ENCODE measurements at regions of chr7 and their contacts with region 1.

Region 1: DNA sequence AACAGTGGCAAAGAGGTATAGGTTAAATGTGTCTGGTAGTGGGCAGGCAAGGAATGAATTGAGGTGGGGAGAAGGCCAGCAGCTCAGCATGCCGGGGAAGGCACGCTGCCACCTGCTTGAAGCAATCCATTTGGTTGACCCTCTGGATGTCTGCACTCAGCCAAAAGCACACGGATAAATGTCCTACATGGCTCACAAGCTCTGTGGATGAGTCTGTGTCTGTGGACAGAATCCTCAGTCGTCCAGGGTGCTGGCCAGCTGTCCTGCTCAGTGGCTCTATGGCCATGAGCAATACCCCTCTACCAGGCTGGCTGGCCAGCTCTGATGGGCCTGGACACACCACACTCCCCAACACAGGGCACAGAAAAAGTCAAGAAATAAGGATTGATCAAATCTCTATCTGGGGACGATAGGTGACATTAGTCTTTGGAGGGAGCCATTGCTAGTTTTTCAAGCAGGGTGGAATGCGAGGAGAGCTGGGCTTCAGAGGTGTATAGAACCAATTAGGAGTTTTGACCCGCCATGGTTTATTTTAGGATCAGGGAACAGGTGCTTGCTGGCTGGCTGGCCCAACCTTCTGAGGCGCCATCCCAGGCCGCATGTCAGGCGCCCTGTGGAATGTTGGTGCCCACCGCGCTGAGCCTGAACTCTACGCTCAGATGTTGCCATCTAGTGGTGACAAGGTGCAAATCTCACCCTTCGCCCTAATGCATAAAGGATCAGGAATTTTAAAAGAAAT is 493.4 kb downstream of the TNS3 start:
- DNase-seq: peak; percentile 49
- H3K4me3 ChIP-seq: no peak overlapping the region
- H3K27ac ChIP-seq: no peak overlapping the region
- H3K4me1 ChIP-seq: no peaks in the 10 kb centered on the region
- H3K27me3 ChIP-seq: no peaks in the 10 kb centered on the region
- CTCF ChIP-seq: peak; percentile 68 to 86 (median 84)
- POLR2A ChIP-seq: no peak

Region 2: DNA sequence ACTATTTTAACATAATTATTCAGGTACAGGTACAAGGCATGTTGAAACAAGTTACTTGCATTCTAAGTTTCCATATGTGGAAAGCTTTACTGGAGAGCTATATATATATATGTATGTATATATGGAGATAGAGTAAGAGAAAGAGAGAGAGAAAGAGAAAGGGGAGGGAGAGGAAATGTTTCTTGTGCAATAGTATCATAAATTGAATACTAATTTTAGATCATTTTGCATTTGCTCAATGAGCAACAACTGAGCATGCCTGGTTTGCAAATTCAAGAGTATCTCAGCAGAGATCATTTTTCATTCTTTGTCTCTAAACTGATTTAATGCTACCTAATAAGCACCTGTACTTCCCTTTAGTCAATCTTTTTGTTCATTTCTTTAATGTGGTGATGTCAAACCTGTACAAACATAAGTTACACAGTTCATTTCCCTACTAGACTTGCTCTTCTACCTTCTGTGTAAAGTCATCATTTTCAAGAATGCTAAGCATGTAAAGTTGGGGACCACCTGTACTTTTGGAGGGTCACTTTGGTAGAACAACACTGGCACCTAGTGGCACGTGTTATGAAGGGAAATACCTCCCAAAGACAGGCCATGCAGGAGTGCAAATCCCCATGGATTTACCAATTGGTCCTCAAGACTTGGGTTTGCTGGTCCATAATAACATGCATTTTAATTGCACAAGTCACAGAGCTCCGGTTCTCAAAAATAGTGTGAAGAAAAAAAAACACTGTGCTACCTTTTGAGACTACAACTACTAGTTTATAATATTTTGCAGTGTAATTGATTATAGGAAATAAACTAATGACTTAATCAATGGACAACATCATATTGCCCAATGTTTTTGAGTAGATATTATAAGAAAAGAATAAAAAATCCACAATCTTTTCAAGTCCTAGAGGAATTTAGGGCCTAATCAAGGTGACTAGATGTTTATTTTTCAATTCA is 736.2 kb before region 1 on chr7:
- intact Hi-C with region 1: loop called (anchors 5 kb)
- DNase-seq: peak; percentile 21
- H3K4me3 ChIP-seq: no peak overlapping the region
- H3K27ac ChIP-seq: no peak overlapping the region
- H3K4me1 ChIP-seq: no peaks in the 10 kb centered on the region
- H3K27me3 ChIP-seq: no peaks in the 10 kb centered on the region
- CTCF ChIP-seq: peak in 3 of 4 experiments; percentile 47 to 76 (median 61)
- POLR2A ChIP-seq: no peak

Region 3: GRCh38 chr7:46776790-46777189 is 311.7 kb before region 1 on chr7:
- intact Hi-C with region 1: loop called (anchors 10 kb)
- DNase-seq: no peak
- H3K4me3 ChIP-seq: no peak overlapping the region
- H3K27ac ChIP-seq: no peak overlapping the region
- H3K4me1 ChIP-seq: no peaks in the 10 kb centered on the region
- H3K27me3 ChIP-seq: no peaks in the 10 kb centered on the region
- CTCF ChIP-seq: peak in 3 of 4 experiments; percentile 12 to 27 (median 24)
- POLR2A ChIP-seq: no peak

Region 4: GRCh38 chr7:47045207-47046051 is 43.1 kb before region 1 on chr7:
- intact Hi-C with region 1: no loop called
- DNase-seq: peak; percentile 21
- H3K4me3 ChIP-seq: no peak overlapping the region
- H3K27ac ChIP-seq: no peak overlapping the region
- H3K4me1 ChIP-seq: no peaks in the 10 kb centered on the region
- H3K27me3 ChIP-seq: no peaks in the 10 kb centered on the region
- CTCF ChIP-seq: no peak
- POLR2A ChIP-seq: no peak

Region 5: DNA sequence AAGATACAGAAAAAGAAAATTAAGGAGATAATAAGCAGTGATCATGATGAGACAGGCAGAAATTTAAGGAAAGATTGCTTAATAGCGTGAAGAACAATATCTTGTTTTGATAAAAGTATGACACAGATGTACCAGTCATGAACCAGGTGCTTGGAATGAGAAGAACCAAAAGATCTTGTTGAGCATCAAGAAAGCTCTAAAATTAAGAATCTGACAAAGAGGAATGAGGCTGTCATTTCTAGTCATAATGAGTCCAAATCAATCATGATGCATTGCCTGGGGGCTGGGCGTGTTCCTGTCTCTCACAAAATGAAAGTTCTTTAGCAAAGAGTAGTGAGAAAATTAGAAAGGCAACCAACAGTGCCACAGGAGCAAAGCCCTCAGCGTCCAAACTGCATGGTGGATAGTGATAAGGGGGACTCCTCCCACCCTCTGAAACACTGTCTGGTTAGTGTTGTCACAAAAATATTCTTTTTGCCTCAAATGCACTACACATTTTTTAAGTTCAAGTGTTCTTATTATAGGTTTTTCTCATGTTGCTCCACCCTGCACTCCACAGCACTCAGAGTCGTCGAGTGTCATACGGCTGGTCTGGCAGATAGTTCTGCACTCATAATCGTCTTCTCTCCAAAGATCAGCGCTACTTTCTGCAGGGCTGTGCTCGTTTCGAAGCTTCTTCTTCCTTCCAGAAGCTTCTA is 53.8 kb after region 1 on chr7:
- intact Hi-C with region 1: no loop called
- DNase-seq: no peak
- H3K4me3 ChIP-seq: no peak overlapping the region
- H3K27ac ChIP-seq: no peak overlapping the region
- H3K4me1 ChIP-seq: no peaks in the 10 kb centered on the region
- H3K27me3 ChIP-seq: no peaks in the 10 kb centered on the region
- CTCF ChIP-seq: no peak
- POLR2A ChIP-seq: no peak

Region 6: GRCh38 chr7:47179812-47180515 is 91.5 kb after region 1 on chr7:
- intact Hi-C with region 1: loop called (anchors 5 kb)
- DNase-seq: peak; percentile 40
- H3K4me3 ChIP-seq: no peak overlapping the region
- H3K27ac ChIP-seq: no peak overlapping the region
- H3K4me1 ChIP-seq: peaks cover 3% of the 10 kb centered on the region
- H3K27me3 ChIP-seq: no peaks in the 10 kb centered on the region
- CTCF ChIP-seq: peak; percentile 29 to 76 (median 68)
- POLR2A ChIP-seq: no peak